ENCODE measurements at regions of chr17 and their contacts with region 1.

Region 1: DNA sequence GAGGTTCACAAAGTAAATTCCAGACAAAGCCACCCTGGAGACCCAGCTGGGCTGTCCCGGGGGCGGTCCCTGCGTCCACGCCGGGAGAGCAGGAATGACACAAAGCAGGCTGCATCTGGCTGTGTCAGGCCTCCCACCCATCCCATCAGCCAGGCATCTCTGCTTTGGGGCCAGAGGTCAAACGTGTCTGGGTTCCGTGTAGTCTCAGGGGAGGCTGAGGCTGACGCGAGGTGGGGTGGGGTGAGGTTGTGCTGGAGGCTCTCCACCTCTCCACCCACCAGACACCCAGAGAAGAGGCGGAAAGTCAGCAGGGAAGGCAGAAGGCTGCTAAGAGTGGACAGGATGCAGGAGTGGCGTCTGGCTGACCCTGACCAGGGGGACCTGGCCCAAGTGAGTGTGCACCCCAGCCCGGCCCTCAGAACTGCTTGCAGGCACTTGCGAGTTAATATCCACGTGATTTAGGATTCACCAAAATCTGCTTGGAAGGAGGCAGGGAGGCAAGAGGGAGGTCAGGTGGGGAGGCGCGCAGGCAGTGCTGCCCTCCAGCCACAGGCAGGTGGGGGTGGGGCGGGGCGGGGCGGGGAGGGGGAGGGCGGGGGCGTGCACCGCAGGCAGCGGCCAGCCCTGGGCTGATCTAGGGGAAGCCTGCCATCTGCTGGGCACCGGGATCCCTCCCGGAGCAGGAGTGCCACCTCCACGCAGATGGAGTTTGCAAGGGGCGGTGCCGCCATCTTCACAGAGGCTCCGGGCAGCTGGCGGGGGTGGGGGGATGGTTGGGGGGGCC is 44.3 kb downstream of the TBC1D16 start:
- DNase-seq: peak; percentile 93 to 94 (median 93)
- ATAC-seq: peak; percentile 83
- H3K4me3 ChIP-seq: no peak overlapping the region
- H3K4me1 ChIP-seq: peaks cover 63% of the 10 kb centered on the region
- CTCF ChIP-seq: peak; percentile 75

Region 2: GRCh38 chr17:79789534-79790353 is 201.6 kb before region 1 on chr17:
- intact Hi-C with region 1: loop called in 1 of 2 experiments (anchors 5 kb)
- DNase-seq: peak in 2 of 3 donors; percentile 66 to 68
- ATAC-seq: peak; percentile 75
- H3K4me3 ChIP-seq: no peak overlapping the region
- H3K4me1 ChIP-seq: peaks cover 13% of the 10 kb centered on the region
- CTCF ChIP-seq: peak; percentile 68

Region 3: DNA sequence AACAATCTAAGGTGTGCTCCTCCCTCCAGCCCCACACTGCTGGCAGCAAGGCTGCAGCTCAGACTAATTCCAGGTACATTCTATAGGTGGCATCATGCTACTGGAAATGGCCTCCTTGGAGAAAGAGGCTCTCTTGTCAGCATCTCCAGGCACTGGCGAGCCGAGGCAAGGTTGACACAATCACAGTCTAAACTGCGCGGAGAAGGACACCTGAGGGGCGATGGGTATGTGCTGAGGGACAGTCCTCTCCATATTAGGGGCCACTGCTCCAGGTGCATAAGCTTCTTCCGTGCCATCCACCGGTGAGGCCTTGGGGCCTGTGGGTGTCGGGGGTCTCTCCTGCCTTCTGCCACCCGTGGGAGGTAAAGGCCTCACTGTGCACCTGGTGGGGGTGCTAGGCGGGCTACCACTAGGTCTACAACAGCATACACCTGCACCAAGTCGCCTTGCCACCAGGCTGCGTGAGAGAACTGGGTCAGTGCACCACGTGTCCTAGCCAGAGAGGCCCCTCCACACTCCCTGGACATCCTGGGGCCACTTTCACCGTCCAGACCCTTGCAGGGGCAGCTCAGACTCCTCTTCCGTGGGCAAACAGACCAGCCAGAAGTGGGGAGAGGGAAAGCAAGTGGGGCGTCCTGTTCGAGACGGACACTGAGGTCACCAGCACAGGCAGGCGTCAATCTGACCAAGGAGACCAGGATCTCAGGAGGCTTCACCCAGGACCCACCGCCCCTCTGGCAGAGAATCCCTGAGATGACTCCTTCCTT is 182.4 kb before region 1 on chr17:
- intact Hi-C with region 1: loop called in 1 of 2 experiments (anchors 10 kb)
- DNase-seq: peak in 2 of 3 donors; percentile 62 to 63
- ATAC-seq: peak; percentile 77
- H3K4me3 ChIP-seq: no peak overlapping the region
- H3K4me1 ChIP-seq: peaks cover 43% of the 10 kb centered on the region
- CTCF ChIP-seq: peak; percentile 42

Region 4: DNA sequence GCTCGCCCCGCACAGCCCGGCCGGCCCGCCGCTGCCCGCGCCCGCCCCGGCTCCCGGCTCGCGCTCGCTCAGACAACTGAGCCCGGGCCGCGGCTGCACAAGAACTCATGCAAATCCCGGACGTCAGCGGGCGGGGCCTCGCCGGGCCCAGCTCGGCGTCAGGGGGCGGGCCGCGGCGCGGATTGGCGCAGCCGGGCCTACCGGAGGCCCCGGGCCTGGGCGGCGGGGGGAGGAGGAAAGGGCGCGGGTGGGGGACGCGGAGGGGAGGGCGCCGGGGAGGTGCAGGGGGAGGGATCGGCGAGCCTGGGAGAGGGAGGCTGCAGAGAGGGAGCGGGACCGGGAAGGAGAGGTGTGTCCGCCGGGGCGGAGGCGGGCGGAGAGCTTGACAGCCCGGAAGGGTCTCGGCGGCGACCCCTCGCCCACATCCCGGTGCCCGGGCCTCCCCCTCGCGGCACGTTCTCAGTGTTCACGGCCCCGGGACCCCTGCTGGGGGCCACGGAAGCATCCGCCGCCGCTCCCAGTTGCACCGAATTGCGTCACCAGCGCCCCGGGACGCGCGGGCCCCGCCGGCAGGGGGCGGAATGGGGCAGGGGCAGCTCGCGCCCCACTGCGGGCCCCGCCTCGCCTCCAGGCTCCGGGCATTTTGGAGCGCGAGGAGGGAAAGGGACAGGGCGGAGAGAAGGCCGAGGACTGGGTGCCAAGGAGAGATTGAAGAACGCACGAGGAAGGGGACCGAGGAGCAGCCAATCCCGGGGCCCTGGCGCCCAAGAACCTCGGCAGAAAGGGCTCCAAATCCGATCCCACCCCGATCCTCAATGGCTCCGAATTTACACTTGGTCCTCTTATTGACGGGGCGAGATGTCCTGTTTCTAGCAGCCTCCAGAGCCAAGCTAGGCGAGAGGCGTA is 151.7 kb before region 1 on chr17 and contains the start of gene CBX4:
- intact Hi-C with region 1: loop called in 1 of 2 experiments (anchors 10 kb)
- DNase-seq: peak; percentile 96 to 98 (median 97)
- ATAC-seq: peak; percentile 78
- H3K4me3 ChIP-seq: peak within 1 kb of the TSS; percentile 51
- H3K4me1 ChIP-seq: peaks cover 79% of the 10 kb centered on the region
- CTCF ChIP-seq: peak; percentile 84
- total RNA-seq, gene CBX4: 10.2 to 14.2 (median 13.2) TPM

Region 5: GRCh38 chr17:79892459-79892858 is 98.9 kb before region 1 on chr17:
- intact Hi-C with region 1: no loop called
- DNase-seq: peak; percentile 85 to 93 (median 88)
- ATAC-seq: peak; percentile 99
- H3K4me3 ChIP-seq: no peak overlapping the region
- H3K4me1 ChIP-seq: peaks cover 11% of the 10 kb centered on the region
- CTCF ChIP-seq: no peak

Measured in mucosa of descending colon (tissue), 3 donors.